H1 (cell line): ENCODE measurements at regions of chr7 and their contacts with region 1.

Region 1: DNA sequence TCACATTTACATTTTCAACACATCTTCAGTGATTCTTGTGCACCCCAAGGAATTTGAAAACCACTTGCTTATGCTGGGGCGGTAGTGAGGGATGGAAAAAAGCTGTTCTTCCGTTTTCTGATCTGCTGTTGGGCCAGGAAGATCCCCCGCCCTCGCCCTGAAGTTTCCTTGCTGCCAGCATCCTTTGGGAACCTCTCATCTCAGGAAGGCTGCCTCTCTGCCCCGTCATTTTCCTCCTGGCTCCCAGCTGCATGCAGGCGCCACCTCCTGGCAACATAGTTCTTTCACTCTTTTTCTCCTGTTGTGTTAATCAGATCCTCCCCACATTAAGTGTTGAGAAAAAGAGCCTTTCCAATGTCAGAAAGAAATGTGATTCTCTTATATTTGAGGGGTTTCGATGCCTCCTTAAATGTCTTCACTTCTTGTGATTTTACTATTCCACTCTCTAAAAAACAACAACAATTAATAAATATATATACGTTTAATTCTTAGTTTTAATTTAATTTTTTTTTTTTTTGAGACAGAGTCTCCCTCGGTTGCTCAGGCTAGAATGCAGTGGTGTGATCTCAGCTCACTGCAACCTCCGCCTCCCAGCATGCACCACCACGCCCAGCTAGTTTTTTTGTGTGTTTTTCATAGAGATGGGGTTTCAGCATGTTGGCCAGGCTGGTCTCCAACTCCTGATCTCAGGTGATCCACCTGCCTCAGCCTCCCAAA is 122.9 kb downstream of the RALA start:
- DNase-seq: peak; percentile 68 to 81
- H3K4me3 ChIP-seq: no peak overlapping the region
- H3K27ac ChIP-seq: no peak overlapping the region
- H3K4me1 ChIP-seq: peaks cover 0 to 4% (median 0%) of the 10 kb centered on the region in 4 experiments; a peak in 2 of 7 replicates
- H3K27me3 ChIP-seq: no peaks in the 10 kb centered on the region
- CTCF ChIP-seq: peak; percentile 73 to 87 (median 82)
- EP300 ChIP-seq: no peak
- POLR2A ChIP-seq: no peak
- RAD21 ChIP-seq: peak; percentile 84 to 88

Region 2: GRCh38 chr7:39589323-39590111 is 156.7 kb before region 1 on chr7:
- CTCF ChIA-PET with region 1: interaction called, 14 read pairs
- POLR2A ChIA-PET with region 1: interaction called, 4 read pairs
- DNase-seq: peak in 1 of 2 experiments; percentile 60
- H3K4me3 ChIP-seq: no peak overlapping the region
- H3K27ac ChIP-seq: no peak overlapping the region
- H3K4me1 ChIP-seq: peaks cover 0 to 2% (median 0%) of the 10 kb centered on the region in 4 experiments; a peak in 2 of 7 replicates
- H3K27me3 ChIP-seq: no peaks in the 10 kb centered on the region
- CTCF ChIP-seq: no peak
- EP300 ChIP-seq: peak in 1 of 2 experiments; percentile 19; a peak in 1 of 3 replicates
- POLR2A ChIP-seq: no peak
- RAD21 ChIP-seq: no peak

Region 3: GRCh38 chr7:39664057-39664456 is 82.2 kb before region 1 on chr7:
- CTCF ChIA-PET with region 1: interaction called, 33 read pairs
- POLR2A ChIA-PET with region 1: interaction called, 3 read pairs
- DNase-seq: no peak
- H3K4me3 ChIP-seq: no peak overlapping the region
- H3K27ac ChIP-seq: no peak overlapping the region
- H3K4me1 ChIP-seq: peaks cover 2 to 11% (median 5%) of the 10 kb centered on the region in 4 experiments; a peak in 4 of 7 replicates
- H3K27me3 ChIP-seq: no peaks in the 10 kb centered on the region
- CTCF ChIP-seq: no peak
- EP300 ChIP-seq: no peak
- POLR2A ChIP-seq: no peak
- RAD21 ChIP-seq: no peak

Region 4: DNA sequence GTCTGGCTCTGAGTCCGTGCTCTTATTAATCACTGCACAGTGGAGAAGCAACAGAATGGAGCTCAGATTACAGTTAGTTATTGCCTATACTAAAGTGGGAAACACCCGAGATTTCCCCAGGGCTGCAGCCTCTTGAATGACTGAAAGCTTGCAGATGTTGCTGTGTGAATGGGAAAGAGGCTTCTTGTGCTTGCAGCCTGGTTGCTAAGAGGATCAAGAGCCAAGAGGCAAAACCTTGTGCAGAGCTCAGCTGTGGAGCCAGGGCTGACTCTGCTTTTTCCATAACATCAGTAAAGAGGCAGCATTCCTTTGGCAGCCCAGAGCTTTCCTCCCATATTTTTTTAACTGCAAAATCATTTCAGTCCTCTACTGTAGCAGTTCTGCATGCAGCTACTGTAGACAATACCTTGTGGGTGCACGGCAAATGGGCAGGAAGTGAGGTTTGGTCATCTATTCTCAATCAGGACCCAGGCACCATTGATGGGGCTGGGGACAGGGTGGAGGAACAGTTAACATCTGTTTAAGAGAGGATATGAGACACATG is 36.4 kb before region 1 on chr7:
- CTCF ChIA-PET with region 1: interaction called, 140 read pairs
- POLR2A ChIA-PET with region 1: interaction called, 3 read pairs
- DNase-seq: no peak
- H3K4me3 ChIP-seq: no peak overlapping the region
- H3K27ac ChIP-seq: no peak overlapping the region
- H3K4me1 ChIP-seq: no peaks in the 10 kb centered on the region; a peak in 1 of 7 replicates
- H3K27me3 ChIP-seq: no peaks in the 10 kb centered on the region; a peak in 1 of 7 replicates
- CTCF ChIP-seq: no peak
- EP300 ChIP-seq: no peak
- POLR2A ChIP-seq: no peak
- RAD21 ChIP-seq: no peak

Region 5: DNA sequence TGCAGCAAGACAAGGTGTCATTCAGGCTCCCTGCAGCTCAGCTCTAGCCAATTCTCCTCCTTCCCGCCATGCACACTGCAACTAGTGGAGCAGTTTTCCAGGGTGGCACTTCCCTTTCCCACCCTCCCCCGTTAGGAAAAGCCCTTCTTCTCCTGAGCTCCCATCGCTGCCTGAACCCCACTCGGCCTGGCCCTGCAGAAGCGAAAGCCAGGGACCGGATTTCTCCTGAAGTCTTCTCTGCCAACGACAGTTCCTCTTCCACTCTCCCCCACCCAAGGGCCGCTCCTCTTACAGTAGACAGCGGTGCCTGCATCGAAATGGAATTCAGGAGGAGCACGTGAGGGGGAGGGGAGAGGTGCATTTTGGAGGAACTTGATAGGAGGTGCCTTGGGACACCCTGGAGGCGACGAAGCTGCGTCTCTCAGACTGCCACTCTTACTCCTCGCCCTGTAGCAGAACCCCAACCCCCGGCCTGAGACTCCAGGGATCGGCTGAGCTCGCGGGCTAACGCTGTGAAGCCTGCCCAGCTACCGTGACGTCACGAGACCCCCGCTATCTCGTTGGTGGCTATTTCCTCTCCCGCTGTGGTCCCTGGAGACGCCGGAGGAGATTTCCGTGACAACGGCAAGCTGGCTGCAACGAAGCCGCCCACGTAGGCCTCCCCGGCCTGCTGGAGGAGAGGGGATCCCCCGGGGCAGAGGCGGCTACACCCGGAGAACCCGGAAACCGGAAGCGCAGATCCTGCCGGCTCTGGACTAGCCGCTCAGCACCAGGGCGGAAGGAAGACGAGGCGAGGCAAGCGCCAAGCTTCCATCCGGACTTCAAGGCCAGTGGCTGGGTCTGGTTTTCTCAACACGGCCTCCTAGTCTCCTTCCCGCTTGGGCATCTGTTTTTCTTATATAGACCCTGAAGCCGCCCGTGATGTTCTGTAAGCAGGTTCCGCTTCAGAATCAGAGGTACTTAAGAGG is 13.1 kb before region 1 on chr7:
- CTCF ChIA-PET with region 1: interaction called, 85 read pairs
- POLR2A ChIA-PET with region 1: interaction called, 15 read pairs
- DNase-seq: peak; percentile 94 to 99
- H3K4me3 ChIP-seq: peak overlapping the region; percentile 34 to 65 (median 58)
- H3K27ac ChIP-seq: peak overlapping the region; percentile 75
- H3K4me1 ChIP-seq: peaks cover 6 to 13% (median 7%) of the 10 kb centered on the region in 4 experiments
- H3K27me3 ChIP-seq: peaks cover 0 to 15% (median 6%) of the 10 kb centered on the region in 4 experiments; a peak in 3 of 7 replicates
- CTCF ChIP-seq: no peak
- EP300 ChIP-seq: no peak
- POLR2A ChIP-seq: peak in 1 of 2 experiments; percentile 61
- RAD21 ChIP-seq: 0 out of 4 replicates have a peak, but pooled peaks of 1 of the 2 experiments have one; percentile 11